A673 (cell line): ENCODE measurements at regions of chr12 and their contacts with region 1.

Region 1: DNA sequence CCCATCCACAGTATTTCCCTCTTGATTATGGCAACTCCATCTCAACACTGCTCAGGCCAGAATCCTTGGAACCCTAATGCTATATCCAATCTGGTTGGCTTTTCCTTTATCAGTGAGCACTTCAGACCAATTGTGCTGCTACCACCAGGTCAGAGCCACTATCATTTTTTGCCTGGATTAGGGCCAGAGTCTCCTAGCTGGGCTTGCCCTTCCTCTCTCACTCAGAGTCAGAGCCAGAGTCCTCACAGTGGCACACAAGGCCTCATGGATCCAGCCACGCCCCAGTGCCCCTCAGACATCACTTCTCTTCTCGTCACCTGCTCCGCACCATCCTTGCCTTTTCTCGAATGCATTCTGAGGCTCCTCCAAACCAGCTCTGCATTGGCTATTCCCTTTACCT is 211.1 kb downstream of the ANO6 start:
- DNase-seq: no peak
- H3K4me3 ChIP-seq: no peak overlapping the region
- H3K27ac ChIP-seq: no peak overlapping the region
- H3K4me1 ChIP-seq: no peaks in the 10 kb centered on the region
- H3K27me3 ChIP-seq: no peaks in the 10 kb centered on the region
- CTCF ChIP-seq: no peak

Region 2: GRCh38 chr12:45034861-45035265 is 392.2 kb before region 1 on chr12:
- CTCF ChIA-PET with region 1: no interaction called
- POLR2A ChIA-PET with region 1: no interaction called
- intact Hi-C with region 1: no loop called
- DNase-seq: no peak
- H3K4me3 ChIP-seq: no peak overlapping the region
- H3K27ac ChIP-seq: no peak overlapping the region
- H3K4me1 ChIP-seq: no peaks in the 10 kb centered on the region
- H3K27me3 ChIP-seq: no peaks in the 10 kb centered on the region
- CTCF ChIP-seq: no peak

Region 3: DNA sequence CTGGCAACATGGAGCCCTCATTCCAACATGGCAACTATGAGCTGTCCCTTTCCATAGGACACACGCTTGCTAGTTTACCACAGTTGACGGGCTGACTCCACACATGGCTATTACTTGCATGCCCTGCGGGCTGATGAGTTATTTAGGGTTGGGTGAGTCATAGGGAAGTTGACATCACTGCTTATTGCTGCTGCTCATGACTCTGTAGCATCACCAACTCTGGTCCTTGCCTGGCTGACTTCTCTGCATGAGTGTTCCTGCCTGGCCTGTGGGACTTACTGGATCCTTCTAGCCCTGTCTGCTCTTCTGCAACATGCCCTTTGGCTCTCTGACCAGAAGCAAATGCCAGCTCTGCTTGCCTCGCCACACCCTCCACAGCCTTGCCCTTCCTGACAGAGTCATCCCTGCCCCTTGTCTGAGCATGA is 11.6 kb before region 1 on chr12:
- CTCF ChIA-PET with region 1: no interaction called
- POLR2A ChIA-PET with region 1: interaction called, 17 read pairs
- intact Hi-C with region 1: no loop called
- DNase-seq: peak; percentile 72
- H3K4me3 ChIP-seq: no peak overlapping the region
- H3K27ac ChIP-seq: no peak overlapping the region
- H3K4me1 ChIP-seq: no peaks in the 10 kb centered on the region
- H3K27me3 ChIP-seq: no peaks in the 10 kb centered on the region
- CTCF ChIP-seq: no peak

Region 4: DNA sequence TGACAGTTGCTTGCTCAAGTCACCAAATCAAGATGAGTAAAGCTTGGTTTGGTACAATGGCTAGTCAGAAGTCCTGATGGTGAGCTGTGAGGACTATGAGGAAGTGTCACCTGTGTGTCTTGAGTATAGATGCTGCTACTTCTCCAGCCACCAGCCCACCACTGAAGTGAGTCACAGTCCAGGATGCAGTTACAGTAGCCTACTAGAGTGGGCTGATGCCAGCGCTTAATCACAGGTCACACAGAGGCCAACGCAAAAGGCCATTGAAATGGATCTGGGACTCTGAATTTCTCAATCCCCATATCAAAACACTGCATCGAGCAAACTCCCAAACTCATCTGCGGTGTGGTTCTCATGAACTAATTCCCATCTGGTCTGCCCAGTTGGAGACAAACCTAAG is 12.0 kb after region 1 on chr12:
- CTCF ChIA-PET with region 1: no interaction called
- POLR2A ChIA-PET with region 1: no interaction called
- intact Hi-C with region 1: loop called (anchors 2 kb)
- DNase-seq: no peak
- H3K4me3 ChIP-seq: no peak overlapping the region
- H3K27ac ChIP-seq: no peak overlapping the region
- H3K4me1 ChIP-seq: no peaks in the 10 kb centered on the region
- H3K27me3 ChIP-seq: no peaks in the 10 kb centered on the region
- CTCF ChIP-seq: no peak

Region 5: GRCh38 chr12:45475594-45475993 is 48.6 kb after region 1 on chr12:
- CTCF ChIA-PET with region 1: interaction called, 14 read pairs
- POLR2A ChIA-PET with region 1: no interaction called
- intact Hi-C with region 1: no loop called
- DNase-seq: no peak
- H3K4me3 ChIP-seq: no peak overlapping the region
- H3K27ac ChIP-seq: no peak overlapping the region
- H3K4me1 ChIP-seq: no peaks in the 10 kb centered on the region
- H3K27me3 ChIP-seq: no peaks in the 10 kb centered on the region
- CTCF ChIP-seq: no peak